ENCODE measurements at regions of chr6 and their contacts with region 1.

Region 1: GRCh38 chr6:130500693-130501092 is 134.9 kb downstream of the TMEM200A start:
- DNase-seq: no peak
- ATAC-seq: no peak
- H3K4me3 ChIP-seq: no peak overlapping the region
- H3K4me3 Mint-ChIP-seq: no peak overlapping the region
- H3K27ac ChIP-seq: no peak overlapping the region
- H3K27ac Mint-ChIP-seq: peak overlapping the region in 1 of 2 donors; percentile 15
- H3K4me1 ChIP-seq: peaks cover 0 to 10% of the 10 kb centered on the region in 2 experiments
- H3K4me1 Mint-ChIP-seq: peaks cover 13 to 23% (median 20%) of the 10 kb centered on the region in 3 donors
- H3K27me3 ChIP-seq: no peaks in the 10 kb centered on the region
- H3K27me3 Mint-ChIP-seq: no peaks in the 10 kb centered on the region

Region 2: DNA sequence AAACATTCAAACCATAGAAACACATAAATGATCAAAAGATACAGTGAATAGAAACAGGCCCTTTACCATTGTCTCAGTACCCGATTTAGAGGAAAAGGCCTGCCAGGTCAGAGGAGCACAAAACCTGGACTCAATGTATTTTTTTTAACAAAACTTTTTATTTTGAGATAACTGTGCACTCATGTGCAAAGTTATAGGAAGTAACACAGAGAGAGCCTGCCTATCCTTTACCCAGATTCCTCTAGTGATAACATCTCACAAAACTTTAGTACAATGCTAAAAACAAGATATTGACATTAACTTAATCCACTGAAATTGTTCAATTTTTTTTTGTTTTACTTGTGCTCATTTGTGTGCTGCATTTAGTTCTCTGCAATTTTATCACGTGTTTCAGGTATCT is 241.1 kb before region 1 on chr6:
- CTCF ChIA-PET with region 1: no interaction called
- POLR2A ChIA-PET with region 1: no interaction called
- DNase-seq: peak in 1 of 35 experiments; percentile 6
- ATAC-seq: peak in 2 of 4 experiments; percentile 24 to 44
- H3K4me3 ChIP-seq: no peak overlapping the region
- H3K4me3 Mint-ChIP-seq: peak overlapping the region; percentile 45 to 77 (median 49)
- H3K27ac ChIP-seq: peak overlapping the region; percentile 85
- H3K27ac Mint-ChIP-seq: peak overlapping the region; percentile 84 to 95
- H3K4me1 ChIP-seq: peaks cover 0 to 19% of the 10 kb centered on the region in 2 experiments
- H3K4me1 Mint-ChIP-seq: peaks cover 33 to 41% (median 33%) of the 10 kb centered on the region in 3 donors
- H3K27me3 ChIP-seq: peaks cover 0 to 2% of the 10 kb centered on the region in 2 experiments
- H3K27me3 Mint-ChIP-seq: no peaks in the 10 kb centered on the region

Region 3: GRCh38 chr6:130482645-130483390 is 17.9 kb before region 1 on chr6:
- CTCF ChIA-PET with region 1: no interaction called
- POLR2A ChIA-PET with region 1: no interaction called
- DNase-seq: no peak
- ATAC-seq: peak in 1 of 4 experiments; percentile 12
- H3K4me3 ChIP-seq: no peak overlapping the region
- H3K4me3 Mint-ChIP-seq: peak overlapping the region in 1 of 3 donors; percentile 55
- H3K27ac ChIP-seq: no peak overlapping the region
- H3K27ac Mint-ChIP-seq: peak overlapping the region in 1 of 2 donors; percentile 17
- H3K4me1 ChIP-seq: peaks cover 4 to 17% of the 10 kb centered on the region in 2 experiments
- H3K4me1 Mint-ChIP-seq: peaks cover 29 to 37% (median 32%) of the 10 kb centered on the region in 3 donors
- H3K27me3 ChIP-seq: no peaks in the 10 kb centered on the region
- H3K27me3 Mint-ChIP-seq: no peaks in the 10 kb centered on the region

Region 4: DNA sequence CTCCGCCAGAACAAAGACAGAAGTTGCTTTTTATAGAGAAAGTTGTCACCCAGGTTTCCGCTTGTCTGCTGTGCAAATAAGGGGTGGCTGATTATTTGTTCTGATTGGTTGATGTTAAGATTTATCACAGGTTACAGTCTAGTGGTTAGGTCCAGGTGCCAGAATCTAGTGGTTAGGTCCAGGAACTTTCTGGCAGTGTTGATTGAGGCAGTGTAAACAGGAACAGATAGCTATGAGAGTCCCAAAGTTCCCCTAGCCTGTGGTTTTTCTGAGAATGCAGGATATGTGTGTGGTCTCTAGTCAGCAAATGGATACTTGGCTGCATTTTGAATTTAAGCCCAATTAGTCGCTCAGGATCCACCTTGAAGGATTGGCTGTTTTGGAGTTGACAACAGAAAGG is 13.1 kb after region 1 on chr6:
- CTCF ChIA-PET with region 1: no interaction called
- POLR2A ChIA-PET with region 1: interaction called in 1 of 2 experiments, 11 read pairs
- DNase-seq: peak in 30 of 35 experiments; percentile 4 to 80 (median 48)
- ATAC-seq: peak; percentile 90 to 95 (median 92)
- H3K4me3 ChIP-seq: no peak overlapping the region
- H3K4me3 Mint-ChIP-seq: peak overlapping the region; percentile 22 to 72 (median 46)
- H3K27ac ChIP-seq: peak overlapping the region; percentile 80
- H3K27ac Mint-ChIP-seq: peak overlapping the region; percentile 96 to 97
- H3K4me1 ChIP-seq: peaks cover 16 to 25% of the 10 kb centered on the region in 2 experiments
- H3K4me1 Mint-ChIP-seq: peaks cover 66 to 72% (median 67%) of the 10 kb centered on the region in 3 donors
- H3K27me3 ChIP-seq: no peaks in the 10 kb centered on the region
- H3K27me3 Mint-ChIP-seq: no peaks in the 10 kb centered on the region